ENCODE measurements at regions of chr21 and their contacts with region 1.

Region 1: GRCh38 chr21:44723177-44724131 is 12.1 kb upstream of the TSPEAR start:
- DNase-seq: no peak
- H3K4me3 ChIP-seq: no peak overlapping the region
- H3K27ac ChIP-seq: no peak overlapping the region
- H3K4me1 ChIP-seq: no peaks in the 10 kb centered on the region
- H3K27me3 ChIP-seq: no peaks in the 10 kb centered on the region
- CTCF ChIP-seq: no peak
- EP300 ChIP-seq: no peak
- POLR2A ChIP-seq: no peak

Region 2: GRCh38 chr21:44522456-44523204 is 200.8 kb before region 1 on chr21:
- intact Hi-C with region 1: loop called in 1 of 4 experiments (anchors 10 kb)
- DNase-seq: peak in 2 of 5 donors; percentile 6 to 14
- H3K4me3 ChIP-seq: no peak overlapping the region
- H3K27ac ChIP-seq: no peak overlapping the region
- H3K4me1 ChIP-seq: no peaks in the 10 kb centered on the region
- H3K27me3 ChIP-seq: no peaks in the 10 kb centered on the region
- CTCF ChIP-seq: no peak
- EP300 ChIP-seq: no peak
- POLR2A ChIP-seq: no peak

Region 3: DNA sequence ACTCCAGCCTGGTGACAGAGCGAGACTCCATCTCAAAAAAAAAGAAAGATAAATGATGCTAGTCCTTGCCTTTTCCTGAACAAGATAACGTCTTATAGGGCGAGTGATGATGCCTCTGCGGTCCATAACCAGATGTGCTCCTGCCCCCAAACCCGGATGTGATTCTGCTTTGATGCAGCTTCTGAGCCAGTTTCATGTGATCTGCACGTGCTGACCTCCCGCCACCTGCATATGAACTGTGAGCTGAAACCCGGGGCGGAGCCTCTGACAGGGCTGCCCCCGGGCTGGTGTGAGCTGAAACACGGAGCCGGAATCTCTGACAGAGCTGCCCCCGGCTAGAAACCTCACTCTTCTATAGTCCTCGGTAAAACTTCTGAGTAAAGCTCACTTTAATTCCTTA is 70.3 kb before region 1 on chr21:
- intact Hi-C with region 1: no loop called
- DNase-seq: no peak
- H3K4me3 ChIP-seq: no peak overlapping the region
- H3K27ac ChIP-seq: no peak overlapping the region
- H3K4me1 ChIP-seq: no peaks in the 10 kb centered on the region
- H3K27me3 ChIP-seq: no peaks in the 10 kb centered on the region
- CTCF ChIP-seq: no peak
- EP300 ChIP-seq: no peak
- POLR2A ChIP-seq: no peak

Region 4: DNA sequence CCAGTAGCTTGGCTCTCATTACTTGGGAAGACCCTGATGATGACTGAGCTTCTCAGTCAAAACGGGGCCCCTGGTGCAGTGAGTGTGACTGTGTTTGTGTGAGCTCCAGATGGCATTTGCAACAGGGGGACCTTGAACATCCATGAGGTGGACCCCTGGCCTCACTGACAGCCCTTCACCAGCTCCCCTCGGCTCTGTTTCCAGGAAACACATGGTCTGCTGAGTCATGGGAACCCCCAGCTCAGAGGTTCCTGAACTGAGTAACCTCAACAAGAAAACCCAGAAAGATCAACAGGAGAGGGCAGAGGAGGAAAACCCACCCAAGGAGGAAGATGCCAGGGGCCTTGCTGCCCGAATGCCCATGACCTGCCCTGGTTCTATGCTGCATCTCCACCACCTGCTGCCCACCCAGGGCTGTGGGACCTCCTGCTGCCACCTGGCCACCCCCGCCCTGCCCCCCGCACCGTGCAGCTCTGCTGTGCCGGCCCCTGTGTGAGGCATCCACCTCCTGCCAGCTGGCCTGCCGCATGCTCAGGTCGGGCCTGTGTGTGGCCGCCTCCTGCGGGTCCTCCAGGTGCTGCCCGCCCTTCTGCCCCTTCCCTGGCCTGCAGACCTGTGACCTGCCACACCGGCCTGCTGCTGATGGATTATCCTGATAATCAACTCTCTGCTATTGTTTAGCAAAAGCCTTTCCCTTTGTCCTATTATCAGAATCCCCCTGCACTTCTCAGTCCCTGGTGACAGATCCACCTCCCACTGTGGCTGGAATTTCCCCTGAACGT is 37.3 kb before region 1 on chr21:
- intact Hi-C with region 1: no loop called
- DNase-seq: no peak
- H3K4me3 ChIP-seq: no peak overlapping the region
- H3K27ac ChIP-seq: no peak overlapping the region
- H3K4me1 ChIP-seq: no peaks in the 10 kb centered on the region
- H3K27me3 ChIP-seq: no peaks in the 10 kb centered on the region
- CTCF ChIP-seq: no peak
- EP300 ChIP-seq: no peak
- POLR2A ChIP-seq: no peak